ENCODE measurements at regions of chr1 and their contacts with region 1.

Region 1: DNA sequence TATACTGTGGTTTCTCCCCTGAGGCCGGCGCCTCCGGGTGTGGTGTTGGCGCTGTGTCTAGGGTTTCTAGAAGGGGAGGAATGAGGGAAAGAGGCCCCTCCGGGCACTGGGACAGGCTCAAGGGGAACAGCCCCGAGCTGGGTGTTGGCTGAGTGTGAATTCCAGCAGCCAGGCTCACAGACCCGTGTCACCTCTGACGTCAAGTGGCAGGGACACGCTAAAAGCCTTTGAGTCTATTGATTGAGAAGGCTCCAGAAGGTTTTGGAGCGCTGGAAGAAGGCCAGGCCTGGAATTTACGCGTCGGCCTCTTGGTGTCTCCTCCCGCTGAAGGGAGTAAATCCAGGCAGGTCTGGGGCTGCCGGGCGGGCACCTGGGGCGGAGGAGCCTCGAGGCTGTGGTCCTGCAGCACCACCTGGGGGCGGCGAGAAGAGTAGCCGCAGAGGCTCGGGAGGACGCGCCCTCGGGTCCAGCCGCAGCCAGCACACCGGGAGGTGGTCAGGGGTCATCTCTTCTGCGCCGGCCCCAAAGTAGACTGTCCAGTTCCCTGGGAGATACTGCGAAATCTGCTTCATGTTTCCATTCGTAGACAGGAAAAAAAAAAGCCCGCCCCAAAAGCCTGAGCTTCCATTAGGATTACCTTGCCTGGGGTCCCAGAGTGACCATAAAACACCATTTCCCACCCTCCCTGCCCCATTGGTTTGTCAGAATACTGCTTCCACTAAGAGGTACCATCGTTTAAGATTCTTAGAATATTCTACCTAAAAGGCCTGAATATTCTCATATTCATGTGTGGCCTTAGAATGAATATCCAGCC is 61.7 kb downstream of the TLR5 start:
- DNase-seq: peak; percentile 95 to 97
- H3K4me3 ChIP-seq: peak overlapping the region; percentile 27; the same call in 1 of the 2 replicates
- H3K27ac ChIP-seq: no peak overlapping the region
- H3K4me1 ChIP-seq: no peaks in the 10 kb centered on the region
- H3K27me3 ChIP-seq: peaks cover 13% of the 10 kb centered on the region
- CTCF ChIP-seq: peak; percentile 93

Region 2: DNA sequence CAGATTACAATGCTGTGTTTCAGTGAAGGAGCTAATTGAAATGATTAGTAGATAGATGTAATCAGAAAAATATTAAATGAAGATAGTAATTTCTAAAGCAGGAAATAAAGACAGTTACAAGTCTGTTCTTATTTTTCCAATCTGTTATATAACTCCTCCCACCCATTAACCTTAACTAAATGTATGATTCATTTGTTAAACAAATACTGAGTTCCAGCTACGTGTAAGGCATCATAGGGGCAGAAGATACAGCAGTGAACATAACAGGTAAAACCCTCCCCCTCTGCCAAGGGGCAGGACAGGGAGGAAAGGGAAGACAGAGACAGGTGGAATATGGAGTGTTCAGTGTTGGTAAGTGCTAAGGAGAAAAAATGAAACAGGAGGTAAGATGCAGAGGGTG is 344.4 kb before region 1 on chr1 and contains the start of gene FAM177B:
- CTCF ChIA-PET with region 1: no interaction called
- POLR2A ChIA-PET with region 1: no interaction called
- intact Hi-C with region 1: loop called (anchors 1 kb)
- DNase-seq: peak in 1 of 2 experiments; percentile 44
- H3K4me3 ChIP-seq: no peak within 1 kb of the TSS
- H3K27ac ChIP-seq: no peak within 1 kb of the TSS
- H3K4me1 ChIP-seq: peaks cover 7% of the 10 kb centered on the region; the same call in 1 of the 2 replicates
- H3K27me3 ChIP-seq: no peaks in the 10 kb centered on the region
- CTCF ChIP-seq: no peak
- total RNA-seq, gene FAM177B: not detected in 2 replicates

Region 3: GRCh38 chr1:222792744-222793143 is 288.6 kb before region 1 on chr1:
- CTCF ChIA-PET with region 1: interaction called, 9 read pairs
- POLR2A ChIA-PET with region 1: interaction called, 3 read pairs
- intact Hi-C with region 1: loop called (anchors 1 kb)
- DNase-seq: no peak
- H3K4me3 ChIP-seq: no peak overlapping the region
- H3K27ac ChIP-seq: no peak overlapping the region
- H3K4me1 ChIP-seq: no peaks in the 10 kb centered on the region
- H3K27me3 ChIP-seq: peaks cover 25% of the 10 kb centered on the region; the same call in 1 of the 2 replicates
- CTCF ChIP-seq: peak; percentile 76

Region 4: GRCh38 chr1:223006917-223007648 is 74.3 kb before region 1 on chr1:
- CTCF ChIA-PET with region 1: no interaction called
- POLR2A ChIA-PET with region 1: no interaction called
- intact Hi-C with region 1: loop called (anchors 5 kb)
- DNase-seq: no peak
- H3K4me3 ChIP-seq: no peak overlapping the region
- H3K27ac ChIP-seq: no peak overlapping the region
- H3K4me1 ChIP-seq: peaks cover 2% of the 10 kb centered on the region
- H3K27me3 ChIP-seq: no peaks in the 10 kb centered on the region
- CTCF ChIP-seq: no peak

Region 5: GRCh38 chr1:223031733-223032601 is 49.4 kb before region 1 on chr1:
- CTCF ChIA-PET with region 1: no interaction called
- POLR2A ChIA-PET with region 1: no interaction called
- intact Hi-C with region 1: loop called (anchors 5 kb)
- DNase-seq: peak in 1 of 2 experiments; percentile 28
- H3K4me3 ChIP-seq: no peak overlapping the region
- H3K27ac ChIP-seq: no peak overlapping the region
- H3K4me1 ChIP-seq: peaks cover 8% of the 10 kb centered on the region
- H3K27me3 ChIP-seq: no peaks in the 10 kb centered on the region
- CTCF ChIP-seq: no peak

Region 6: GRCh38 chr1:223123011-223123610 is 41.7 kb after region 1 on chr1:
- CTCF ChIA-PET with region 1: interaction called, 19 read pairs
- POLR2A ChIA-PET with region 1: no interaction called
- intact Hi-C with region 1: loop called (anchors 2 kb)
- DNase-seq: no peak
- H3K4me3 ChIP-seq: peak overlapping the region; percentile 16; the same call in 1 of the 2 replicates
- H3K27ac ChIP-seq: no peak overlapping the region
- H3K4me1 ChIP-seq: peaks cover 43% of the 10 kb centered on the region
- H3K27me3 ChIP-seq: no peaks in the 10 kb centered on the region
- CTCF ChIP-seq: no peak

Measured in PC-9 (cell line).